CD4-positive, alpha-beta T cell (primary cell): ENCODE measurements at regions of chr16 and their contacts with region 1.

Region 1: DNA sequence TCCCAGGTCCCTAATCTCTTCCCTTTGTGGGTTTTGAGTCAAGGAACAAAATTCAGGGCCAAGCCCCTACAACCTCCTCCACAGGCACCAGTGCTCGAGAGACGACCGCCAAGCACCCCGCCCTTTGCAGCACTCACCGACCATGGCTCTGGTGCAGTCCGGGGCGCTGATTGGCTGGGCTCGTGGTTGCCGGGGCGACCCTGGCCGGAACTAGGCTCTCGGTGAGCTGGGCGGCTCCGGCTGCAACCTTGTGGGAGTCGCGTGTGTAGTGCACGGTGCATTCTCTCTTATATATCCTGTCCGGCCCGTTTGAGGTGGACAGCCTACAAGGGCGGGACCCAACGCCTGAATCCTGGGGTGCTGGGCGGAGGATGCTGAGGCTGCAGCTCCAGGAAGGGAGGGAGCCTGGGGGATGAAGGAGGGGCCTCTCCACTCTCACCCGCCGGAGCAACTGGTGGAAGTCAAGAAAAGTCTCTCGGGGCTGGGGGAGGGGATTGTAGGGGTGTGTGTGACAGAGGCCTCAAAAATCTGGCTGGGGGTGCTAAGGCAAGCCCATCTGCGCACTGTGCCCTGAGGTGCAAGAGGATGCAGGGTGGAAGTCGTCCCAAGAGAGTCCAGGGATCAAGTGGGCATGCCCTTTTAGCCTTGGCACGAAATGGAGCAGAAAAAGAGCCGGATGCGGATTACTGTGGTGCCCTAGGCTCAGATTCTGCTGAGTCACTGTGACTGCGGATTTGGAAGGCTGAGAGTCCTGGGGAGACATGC is at the start of gene NQO1:
- DNase-seq: peak; percentile 70 to 91 (median 83)
- ATAC-seq: peak; percentile 94
- H3K4me3 ChIP-seq: peak within 1 kb of the TSS; percentile 67
- H3K4me3 Mint-ChIP-seq: peak within 1 kb of the TSS; percentile 94
- H3K27ac ChIP-seq: peak within 1 kb of the TSS; percentile 23 to 50
- H3K27ac Mint-ChIP-seq: peak within 1 kb of the TSS; percentile 84
- H3K4me1 ChIP-seq: peaks cover 25% of the 10 kb centered on the region
- H3K4me1 Mint-ChIP-seq: peaks cover 22% of the 10 kb centered on the region
- H3K27me3 ChIP-seq: no peaks in the 10 kb centered on the region
- H3K27me3 Mint-ChIP-seq: no peaks in the 10 kb centered on the region
- CTCF ChIP-seq: no peak
- total RNA-seq, gene NQO1: 0.25 to 0.80 TPM

Region 2: DNA sequence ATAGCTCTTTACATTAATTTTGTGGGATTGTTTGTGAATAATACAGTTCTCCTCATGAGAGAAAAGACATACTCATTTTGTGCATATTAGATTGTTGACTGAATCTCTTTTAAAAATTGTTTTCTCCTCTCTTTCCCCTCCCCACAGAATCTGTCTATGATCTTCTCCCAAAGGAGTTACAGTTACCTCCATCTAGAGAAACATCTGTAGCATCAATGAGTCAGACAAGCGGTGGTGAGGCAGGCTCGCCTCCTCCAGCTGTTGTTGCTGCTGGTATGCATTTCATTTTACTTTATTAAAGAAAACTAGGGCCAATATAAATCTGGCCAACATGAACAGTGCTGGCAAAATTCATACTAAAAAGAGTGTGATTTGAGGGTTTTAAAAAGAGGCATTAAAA is 100.2 kb before region 1 on chr16:
- CTCF ChIA-PET with region 1: no interaction called
- POLR2A ChIA-PET with region 1: no interaction called
- intact Hi-C with region 1: no loop called
- DNase-seq: no peak
- ATAC-seq: no peak
- H3K4me3 ChIP-seq: no peak overlapping the region
- H3K4me3 Mint-ChIP-seq: no peak overlapping the region
- H3K27ac ChIP-seq: no peak overlapping the region
- H3K27ac Mint-ChIP-seq: no peak overlapping the region
- H3K4me1 ChIP-seq: no peaks in the 10 kb centered on the region
- H3K4me1 Mint-ChIP-seq: peaks cover 9% of the 10 kb centered on the region
- H3K27me3 ChIP-seq: no peaks in the 10 kb centered on the region
- H3K27me3 Mint-ChIP-seq: no peaks in the 10 kb centered on the region
- CTCF ChIP-seq: no peak

Region 3: DNA sequence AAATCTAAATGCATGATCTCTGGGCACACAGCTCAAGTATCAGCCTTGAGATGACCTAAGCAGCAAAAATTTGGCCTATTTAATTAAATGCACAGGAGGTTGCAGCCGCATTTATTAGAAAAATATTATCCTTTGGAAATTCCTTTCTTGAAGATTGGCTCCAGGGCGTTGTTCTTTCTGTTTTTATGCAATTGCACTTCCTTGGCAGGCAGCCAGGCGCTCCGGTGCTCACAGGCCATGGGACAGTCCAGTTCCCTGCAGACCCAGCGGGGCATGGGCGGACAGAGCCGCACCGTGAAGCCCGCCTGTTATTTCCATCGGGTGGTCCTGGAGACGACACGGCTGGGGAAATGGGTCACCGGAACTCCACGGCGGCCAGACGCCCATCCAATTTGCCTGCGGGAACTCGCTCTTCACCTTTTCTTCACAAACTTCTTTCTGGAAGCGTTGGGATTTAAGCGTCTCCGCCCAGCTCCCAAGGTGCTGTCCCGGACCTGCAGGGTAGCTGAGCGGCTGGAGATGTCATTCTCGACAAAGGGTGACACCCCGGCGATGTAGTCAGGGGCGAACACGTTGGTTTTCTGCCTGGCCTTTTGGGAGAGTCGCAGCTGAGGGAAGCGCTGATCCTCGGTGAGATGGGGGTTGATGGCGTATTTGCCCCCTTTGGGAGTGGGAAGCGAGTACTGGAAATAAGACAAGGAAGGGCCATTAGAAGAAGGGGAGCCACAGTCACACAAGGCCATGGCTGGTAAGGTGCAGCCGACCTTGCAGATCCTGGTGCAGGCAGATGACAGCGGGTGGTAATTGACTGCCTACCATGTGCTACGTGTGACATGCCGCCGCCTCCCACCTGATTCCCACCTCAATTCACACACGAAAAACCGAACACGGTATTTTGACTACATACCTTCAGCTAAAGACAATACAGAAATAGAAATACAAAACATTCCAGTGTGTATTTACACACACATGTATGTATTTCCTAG is 15.7 kb after region 1 on chr16:
- CTCF ChIA-PET with region 1: interaction called, 3 read pairs
- POLR2A ChIA-PET with region 1: interaction called, 5 read pairs
- intact Hi-C with region 1: loop called in 1 of 2 experiments (anchors 1 kb)
- DNase-seq: no peak
- ATAC-seq: no peak
- H3K4me3 ChIP-seq: no peak overlapping the region
- H3K4me3 Mint-ChIP-seq: no peak overlapping the region
- H3K27ac ChIP-seq: no peak overlapping the region
- H3K27ac Mint-ChIP-seq: no peak overlapping the region
- H3K4me1 ChIP-seq: no peaks in the 10 kb centered on the region
- H3K4me1 Mint-ChIP-seq: no peaks in the 10 kb centered on the region
- H3K27me3 ChIP-seq: no peaks in the 10 kb centered on the region
- H3K27me3 Mint-ChIP-seq: no peaks in the 10 kb centered on the region
- CTCF ChIP-seq: no peak

Region 4: GRCh38 chr16:69754469-69755310 is 28.2 kb after region 1 on chr16 and contains the start of gene NOB1:
- CTCF ChIA-PET with region 1: interaction called, 11 read pairs
- POLR2A ChIA-PET with region 1: interaction called, 62 read pairs
- intact Hi-C with region 1: loop called (anchors 1 to 2 kb)
- DNase-seq: peak; percentile 92 to 100 (median 97)
- ATAC-seq: peak; percentile 96
- H3K4me3 ChIP-seq: peak within 1 kb of the TSS; percentile 100
- H3K4me3 Mint-ChIP-seq: peak within 1 kb of the TSS; percentile 100
- H3K27ac ChIP-seq: peak within 1 kb of the TSS; percentile 71 to 78
- H3K27ac Mint-ChIP-seq: peak within 1 kb of the TSS; percentile 89
- H3K4me1 ChIP-seq: peaks cover 24% of the 10 kb centered on the region
- H3K4me1 Mint-ChIP-seq: peaks cover 34% of the 10 kb centered on the region
- H3K27me3 ChIP-seq: no peaks in the 10 kb centered on the region
- H3K27me3 Mint-ChIP-seq: no peaks in the 10 kb centered on the region
- CTCF ChIP-seq: peak; percentile 88
- total RNA-seq, gene NOB1: 31.0 to 33.9 TPM

Region 5: DNA sequence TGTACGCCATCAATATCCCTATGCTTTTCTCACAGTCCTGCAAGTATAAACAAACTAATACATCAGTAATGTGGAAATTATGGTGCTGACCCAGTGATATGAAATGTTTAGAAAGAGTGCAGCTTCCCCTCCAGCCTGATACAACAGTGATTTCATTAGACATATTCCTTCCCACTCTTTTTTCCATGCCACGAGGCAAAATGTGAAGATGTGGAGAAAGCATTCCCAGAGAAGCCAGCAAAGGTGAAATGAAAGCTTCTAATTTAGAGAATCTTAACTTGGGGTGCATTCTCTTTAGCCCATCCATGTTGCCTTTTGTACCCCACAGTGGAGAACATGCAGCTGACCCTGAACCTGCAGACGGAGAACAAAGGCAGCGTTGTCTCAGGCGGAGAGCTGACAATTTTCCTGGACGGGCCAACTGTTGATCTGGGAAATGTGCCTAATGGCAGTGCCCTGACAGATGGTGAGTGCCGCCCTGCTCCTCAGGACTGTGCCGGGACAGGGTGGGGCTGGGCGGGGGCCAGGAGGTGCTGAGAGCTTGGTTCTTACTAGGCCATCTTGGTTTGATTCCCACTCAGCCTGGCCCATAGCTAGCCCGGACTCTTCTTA is 113.4 kb after region 1 on chr16:
- CTCF ChIA-PET with region 1: no interaction called
- POLR2A ChIA-PET with region 1: no interaction called
- intact Hi-C with region 1: no loop called
- DNase-seq: no peak
- ATAC-seq: no peak
- H3K4me3 ChIP-seq: no peak overlapping the region
- H3K4me3 Mint-ChIP-seq: no peak overlapping the region
- H3K27ac ChIP-seq: no peak overlapping the region
- H3K27ac Mint-ChIP-seq: no peak overlapping the region
- H3K4me1 ChIP-seq: no peaks in the 10 kb centered on the region
- H3K4me1 Mint-ChIP-seq: no peaks in the 10 kb centered on the region
- H3K27me3 ChIP-seq: no peaks in the 10 kb centered on the region
- H3K27me3 Mint-ChIP-seq: no peaks in the 10 kb centered on the region
- CTCF ChIP-seq: no peak